Calu3 (cell line): ENCODE measurements at regions of chr2 and their contacts with region 1.

Region 1: DNA sequence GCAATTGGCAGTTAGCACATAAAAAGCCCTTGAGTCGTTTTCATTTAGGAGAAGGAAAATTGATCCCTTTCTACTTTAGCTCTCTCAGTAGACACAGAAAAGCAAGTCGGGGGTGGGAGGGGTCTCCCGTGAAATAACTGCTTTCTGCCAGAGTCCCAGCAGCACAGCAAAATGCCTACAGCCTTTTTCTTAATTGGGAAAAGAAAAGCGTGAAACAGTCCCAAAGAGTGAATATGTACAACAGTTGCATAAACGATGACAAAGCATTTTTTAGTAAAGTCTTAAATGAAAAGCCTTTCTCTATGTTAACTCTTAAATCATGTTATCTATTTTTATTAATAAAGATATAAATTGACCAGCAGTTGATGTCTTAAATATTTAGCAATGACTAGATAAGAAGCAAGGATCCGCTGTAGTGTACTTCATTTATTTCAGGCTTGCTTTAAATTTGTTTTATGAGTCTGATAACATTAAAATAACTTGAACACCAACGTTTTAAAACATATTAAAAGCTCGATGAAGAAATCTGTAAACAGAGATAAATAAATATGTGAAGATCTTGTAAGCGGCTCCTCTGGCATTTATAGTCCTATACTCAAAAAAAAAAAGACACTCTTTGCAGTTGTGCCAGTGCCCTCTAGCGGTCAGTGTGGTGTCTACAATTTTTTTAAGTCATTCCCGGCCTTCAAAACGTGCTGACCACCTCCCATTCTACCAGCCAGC is 42.3 kb upstream of the ATIC start:
- DNase-seq: peak; percentile 65
- H3K4me3 Mint-ChIP-seq: no peak overlapping the region
- H3K27ac Mint-ChIP-seq: no peak overlapping the region
- H3K4me1 Mint-ChIP-seq: no peaks in the 10 kb centered on the region
- H3K27me3 Mint-ChIP-seq: no peaks in the 10 kb centered on the region
- CTCF ChIP-seq: peak; percentile 51

Region 2: GRCh38 chr2:215931256-215931903 is 661.8 kb after region 1 on chr2:
- CTCF ChIA-PET with region 1: no interaction called
- intact Hi-C with region 1: loop called (anchors 10 kb)
- DNase-seq: peak; percentile 58
- H3K4me3 Mint-ChIP-seq: peak overlapping the region; percentile 11
- H3K27ac Mint-ChIP-seq: no peak overlapping the region
- H3K4me1 Mint-ChIP-seq: peaks cover 17% of the 10 kb centered on the region
- H3K27me3 Mint-ChIP-seq: no peaks in the 10 kb centered on the region
- CTCF ChIP-seq: peak; percentile 76